ENCODE measurements at regions of chr1 and their contacts with region 1.

Region 1: DNA sequence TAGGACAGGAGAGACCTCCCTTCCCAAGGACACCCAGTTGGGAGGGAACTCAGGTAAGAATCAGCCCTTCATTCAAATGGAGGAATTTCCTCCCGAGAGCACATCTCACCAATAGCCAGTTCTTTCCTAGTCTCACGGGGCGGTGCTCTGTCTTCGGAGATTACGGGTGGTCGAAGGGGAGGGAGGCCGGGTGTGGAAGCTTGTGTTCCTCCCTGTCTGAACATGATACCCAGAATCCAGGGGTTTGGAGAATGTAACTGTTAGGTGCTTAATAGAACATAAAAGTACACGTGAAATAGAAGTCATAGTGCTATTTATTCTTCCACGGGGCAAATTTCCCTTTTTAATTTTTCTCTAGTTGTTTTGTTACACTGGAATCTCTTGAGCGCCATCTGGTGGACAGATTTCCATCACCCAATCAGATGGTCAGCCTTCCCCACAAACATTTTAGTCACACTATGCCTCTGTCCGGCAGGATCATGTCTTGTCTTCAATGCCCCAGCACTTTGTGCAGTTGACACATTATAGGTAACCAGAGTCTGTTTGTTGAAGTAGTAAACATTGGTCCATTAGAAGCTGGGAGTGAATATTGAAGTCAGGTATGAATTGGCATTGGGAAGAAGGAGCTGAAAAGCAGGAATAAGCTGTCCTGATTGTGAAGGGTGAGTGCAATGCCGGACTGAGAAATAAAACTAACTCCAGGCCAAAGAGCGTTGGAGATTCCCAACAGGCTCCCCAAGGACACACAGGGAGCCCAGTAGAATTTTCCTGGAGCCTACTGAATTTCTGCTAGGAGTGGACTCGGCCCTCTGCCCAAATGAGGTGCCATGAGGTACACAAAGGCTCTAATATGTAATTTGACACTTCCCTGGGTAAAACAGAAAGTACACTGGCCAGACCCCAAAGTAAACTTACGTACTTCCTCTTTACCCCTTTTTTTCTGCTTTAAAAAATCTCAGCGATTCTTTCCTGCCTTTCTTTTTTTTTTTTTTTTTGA is 27.6 kb upstream of the ZNF697 start:
- DNase-seq: peak; percentile 42
- ATAC-seq: peak; percentile 94
- H3K4me3 ChIP-seq: no peak overlapping the region; the same call in 1 of the 2 replicates
- H3K27ac ChIP-seq: no peak overlapping the region
- H3K4me1 ChIP-seq: no peaks in the 10 kb centered on the region
- H3K27me3 ChIP-seq: no peaks in the 10 kb centered on the region; a peak in 1 of 4 replicates
- CTCF ChIP-seq: peak; percentile 63 to 80 (median 78)
- EP300 ChIP-seq: no peak
- POLR2A ChIP-seq: no peak
- RAD21 ChIP-seq: peak; percentile 76

Region 2: DNA sequence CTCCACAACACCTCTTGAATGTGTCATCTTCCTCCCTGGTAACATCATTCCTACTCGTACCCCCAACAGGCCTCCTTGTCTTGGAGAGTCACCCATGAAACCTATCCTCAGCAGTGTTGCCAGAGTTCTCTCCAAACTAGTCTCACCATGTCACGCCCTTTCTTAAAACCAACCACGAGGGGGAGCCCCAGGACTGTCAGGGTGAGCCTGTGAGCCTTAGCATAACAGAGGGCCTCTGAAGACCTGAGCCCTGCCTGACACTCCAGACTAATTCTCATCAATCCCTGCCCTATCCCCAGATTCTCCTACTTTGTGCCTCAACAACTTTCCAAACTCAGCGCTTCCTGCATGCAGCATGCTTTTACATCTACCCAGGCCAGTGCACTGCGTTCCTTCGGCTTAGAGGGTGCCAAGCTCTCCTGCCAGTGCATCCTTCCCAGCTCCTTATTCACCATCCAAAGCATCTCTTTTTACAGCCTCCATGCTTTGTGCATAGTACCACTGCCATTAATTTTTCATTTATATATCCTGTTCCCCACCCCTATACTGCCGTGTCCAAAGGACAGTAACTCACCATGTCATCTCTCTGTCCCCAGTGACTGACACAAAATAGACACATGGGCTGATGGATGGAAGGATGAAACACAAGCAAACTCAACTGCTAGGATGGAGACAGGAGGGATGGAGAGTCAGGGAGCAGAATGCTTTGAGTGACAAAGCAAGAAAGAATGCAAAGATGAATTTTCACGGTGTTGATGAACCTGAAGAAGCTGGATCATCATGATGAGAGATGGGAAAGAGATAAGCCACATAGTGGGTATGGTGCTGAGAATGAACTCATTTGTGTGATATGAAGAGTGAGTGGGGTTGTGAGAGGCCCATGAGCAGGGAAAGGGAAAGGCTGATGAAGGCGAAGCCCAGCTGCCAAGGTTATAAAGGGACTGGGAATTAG is 61.6 kb before region 1 on chr1:
- CTCF ChIA-PET with region 1: interaction called, 446 read pairs
- POLR2A ChIA-PET with region 1: no interaction called
- RAD21 ChIA-PET with region 1: interaction called, 55 read pairs
- SMC1A ChIA-PET with region 1: interaction called, 119 read pairs
- in situ Hi-C with region 1: no loop called
- intact Hi-C with region 1: loop called (anchors 1 kb)
- DNase-seq: peak; percentile 43
- ATAC-seq: peak; percentile 95
- H3K4me3 ChIP-seq: no peak overlapping the region
- H3K27ac ChIP-seq: no peak overlapping the region
- H3K4me1 ChIP-seq: peaks cover 7% of the 10 kb centered on the region; the same call in 1 of the 2 replicates
- H3K27me3 ChIP-seq: no peaks in the 10 kb centered on the region; a peak in 1 of 4 replicates
- CTCF ChIP-seq: peak; percentile 63 to 77 (median 70)
- EP300 ChIP-seq: no peak
- POLR2A ChIP-seq: no peak
- RAD21 ChIP-seq: peak; percentile 93

Region 3: DNA sequence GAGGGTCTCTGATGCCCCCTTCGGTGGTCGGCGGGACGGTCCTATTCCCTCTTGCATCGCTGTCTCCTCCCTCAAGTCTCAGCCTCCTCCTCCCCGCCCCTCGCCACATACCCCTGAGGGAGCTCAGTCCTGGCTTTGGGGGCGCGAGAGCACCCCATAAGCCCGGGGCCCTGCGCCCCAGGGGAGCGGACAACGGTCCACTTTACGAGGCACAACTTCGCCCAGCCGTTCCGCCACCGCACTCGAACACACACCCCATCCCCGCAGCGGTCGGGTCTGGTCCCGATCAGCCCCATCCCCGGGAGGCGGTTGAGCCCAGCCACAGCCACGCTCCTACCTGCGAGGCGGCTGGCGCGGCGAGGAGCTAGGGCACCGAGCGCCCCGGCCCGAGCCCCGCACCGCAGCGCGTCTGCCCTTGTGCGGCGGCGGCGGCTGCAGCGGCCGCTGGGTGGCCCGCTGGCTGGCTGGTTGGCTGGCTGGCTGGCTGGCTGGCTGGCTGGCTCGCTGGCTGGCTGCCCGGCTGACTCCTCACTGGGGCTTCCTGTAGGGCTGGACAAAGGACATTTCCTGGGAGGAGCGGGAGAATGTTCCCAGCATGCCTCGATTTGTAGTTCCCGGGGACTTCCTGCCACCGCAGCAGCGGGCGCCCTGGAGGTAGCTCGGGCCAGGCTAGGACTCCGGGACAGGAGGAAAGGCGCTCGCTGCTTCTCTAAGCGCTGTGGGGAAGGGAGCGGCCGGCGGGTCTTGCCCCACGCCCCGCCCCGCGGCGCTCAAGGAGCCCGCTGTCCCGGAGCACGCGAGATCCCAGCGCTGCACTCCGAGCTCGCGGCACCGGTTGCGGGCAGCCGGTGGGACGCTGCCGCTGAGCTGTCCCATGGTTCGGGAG is 27.7 kb before region 1 on chr1 and contains the start of gene ZNF697:
- CTCF ChIA-PET with region 1: interaction called, 15 read pairs
- POLR2A ChIA-PET with region 1: no interaction called
- RAD21 ChIA-PET with region 1: interaction called, 3 read pairs
- SMC1A ChIA-PET with region 1: interaction called, 11 read pairs
- in situ Hi-C with region 1: no loop called
- intact Hi-C with region 1: no loop called
- DNase-seq: peak; percentile 51
- ATAC-seq: peak; percentile 84
- H3K4me3 ChIP-seq: peak within 1 kb of the TSS; percentile 90
- H3K27ac ChIP-seq: no peak within 1 kb of the TSS; the same call in 1 of the 2 replicates
- H3K4me1 ChIP-seq: no peaks in the 10 kb centered on the region; the same call in 1 of the 2 replicates
- H3K27me3 ChIP-seq: no peaks in the 10 kb centered on the region
- CTCF ChIP-seq: peak in 2 of 3 experiments; percentile 7 to 17; a peak in 1 of 6 replicates
- EP300 ChIP-seq: no peak
- POLR2A ChIP-seq: peak; percentile 61; the same call in 1 of the 2 replicates
- RAD21 ChIP-seq: no peak
- polyA plus RNA-seq, gene ZNF697: 0.74 to 0.99 TPM

Region 4: DNA sequence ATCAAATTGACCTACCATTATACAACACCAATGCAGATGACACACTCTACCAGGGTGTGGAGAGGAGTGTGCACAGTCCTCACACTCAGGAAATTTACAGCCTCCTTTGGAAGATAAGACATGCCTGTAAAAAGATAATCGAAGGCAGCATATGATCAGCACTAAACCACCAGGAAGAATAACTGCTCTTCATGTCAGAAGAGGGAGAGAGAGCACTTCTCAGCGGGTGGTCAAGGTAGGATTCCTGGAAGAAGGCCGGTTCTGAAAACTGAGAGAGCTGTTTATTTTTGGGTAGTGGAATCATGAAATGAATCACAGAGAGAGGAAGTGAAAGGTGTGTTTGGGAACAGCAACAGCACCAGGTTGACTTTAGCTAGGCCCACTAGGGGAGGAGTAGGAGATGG is 13.6 kb before region 1 on chr1:
- CTCF ChIA-PET with region 1: interaction called, 188 read pairs
- POLR2A ChIA-PET with region 1: no interaction called
- RAD21 ChIA-PET with region 1: interaction called, 41 read pairs
- SMC1A ChIA-PET with region 1: interaction called, 53 read pairs
- in situ Hi-C with region 1: no loop called
- intact Hi-C with region 1: no loop called
- DNase-seq: peak; percentile 52
- ATAC-seq: peak; percentile 76
- H3K4me3 ChIP-seq: peak overlapping the region; percentile 15; the same call in 1 of the 2 replicates
- H3K27ac ChIP-seq: peak overlapping the region; percentile 61
- H3K4me1 ChIP-seq: peaks cover 23% of the 10 kb centered on the region
- H3K27me3 ChIP-seq: no peaks in the 10 kb centered on the region; a peak in 1 of 4 replicates
- CTCF ChIP-seq: no peak
- EP300 ChIP-seq: peak; percentile 65 to 94
- POLR2A ChIP-seq: no peak
- RAD21 ChIP-seq: no peak

Measured in GM12878 (cell line).